ENCODE measurements at regions of chr16 and their contacts with region 1.

Region 1: GRCh38 chr16:3150346-3151218 is 15.8 kb downstream of the ZNF213 start:
- DNase-seq: peak; percentile 94 to 99 (median 98)
- ATAC-seq: peak; percentile 81
- H3K4me3 ChIP-seq: peak overlapping the region; percentile 70
- H3K4me3 Mint-ChIP-seq: peak overlapping the region; percentile 93
- H3K27ac ChIP-seq: peak overlapping the region in 1 of 2 donors; percentile 64
- H3K27ac Mint-ChIP-seq: peak overlapping the region; percentile 98
- H3K4me1 ChIP-seq: peaks cover 37% of the 10 kb centered on the region
- H3K4me1 Mint-ChIP-seq: peaks cover 31% of the 10 kb centered on the region
- H3K27me3 ChIP-seq: no peaks in the 10 kb centered on the region
- H3K27me3 Mint-ChIP-seq: peaks cover 22% of the 10 kb centered on the region
- CTCF ChIP-seq: no peak

Region 2: DNA sequence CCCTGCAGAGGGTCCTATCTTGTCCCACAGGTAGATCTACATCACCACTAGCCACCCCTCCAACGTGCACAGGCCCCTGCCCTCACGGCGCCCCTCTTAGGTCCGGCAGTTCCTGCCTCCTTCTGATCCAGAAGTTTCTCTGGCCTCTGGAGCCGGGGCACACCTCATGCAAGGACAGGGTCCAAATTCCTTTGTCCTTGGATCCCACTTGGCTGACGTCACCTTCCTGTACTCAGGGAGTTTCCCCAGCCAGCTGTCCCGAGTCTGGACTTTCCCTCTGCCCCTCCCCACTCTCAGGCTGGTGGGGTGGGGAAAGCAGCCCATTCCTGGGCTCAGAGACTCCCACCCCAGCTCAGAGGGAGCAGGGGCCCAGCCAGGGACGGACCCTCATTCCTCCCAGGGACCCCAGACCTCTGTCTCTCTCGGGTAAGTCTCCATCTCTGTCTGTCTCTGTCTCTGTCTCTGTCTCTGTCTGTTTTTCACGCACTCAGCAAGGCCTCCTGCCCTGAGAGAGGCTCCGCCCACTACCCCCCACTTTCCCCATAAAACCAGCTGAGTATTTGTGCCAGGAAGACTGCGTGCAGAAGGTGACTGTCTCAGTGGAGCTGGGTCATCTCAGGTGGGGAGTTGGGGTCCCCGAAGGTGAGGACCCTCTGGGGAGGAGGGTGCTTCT is 85.4 kb before region 1 on chr16 and contains the start of gene IL32:
- CTCF ChIA-PET with region 1: interaction called, 3 read pairs
- POLR2A ChIA-PET with region 1: interaction called, 10 read pairs
- intact Hi-C with region 1: no loop called
- DNase-seq: peak; percentile 46 to 88 (median 68)
- ATAC-seq: peak; percentile 65
- H3K4me3 ChIP-seq: peak within 1 kb of the TSS; percentile 99
- H3K4me3 Mint-ChIP-seq: peak within 1 kb of the TSS; percentile 99
- H3K27ac ChIP-seq: peak within 1 kb of the TSS; percentile 85 to 98
- H3K27ac Mint-ChIP-seq: peak within 1 kb of the TSS; percentile 97
- H3K4me1 ChIP-seq: peaks cover 78% of the 10 kb centered on the region
- H3K4me1 Mint-ChIP-seq: peaks cover 67% of the 10 kb centered on the region
- H3K27me3 ChIP-seq: no peaks in the 10 kb centered on the region
- H3K27me3 Mint-ChIP-seq: no peaks in the 10 kb centered on the region
- CTCF ChIP-seq: no peak
- total RNA-seq, gene IL32: 378 to 383 TPM

Region 3: GRCh38 chr16:3074860-3075522 is 75.6 kb before region 1 on chr16:
- CTCF ChIA-PET with region 1: no interaction called
- POLR2A ChIA-PET with region 1: interaction called, 13 read pairs
- intact Hi-C with region 1: no loop called
- DNase-seq: peak; percentile 58 to 95 (median 82)
- ATAC-seq: peak; percentile 89
- H3K4me3 ChIP-seq: peak overlapping the region; percentile 34
- H3K4me3 Mint-ChIP-seq: peak overlapping the region; percentile 77
- H3K27ac ChIP-seq: peak overlapping the region; percentile 80 to 86
- H3K27ac Mint-ChIP-seq: peak overlapping the region; percentile 95
- H3K4me1 ChIP-seq: peaks cover 96% of the 10 kb centered on the region
- H3K4me1 Mint-ChIP-seq: peaks cover 93% of the 10 kb centered on the region
- H3K27me3 ChIP-seq: no peaks in the 10 kb centered on the region
- H3K27me3 Mint-ChIP-seq: no peaks in the 10 kb centered on the region
- CTCF ChIP-seq: no peak

Region 4: GRCh38 chr16:3087243-3088235 is 63.0 kb before region 1 on chr16:
- CTCF ChIA-PET with region 1: no interaction called
- POLR2A ChIA-PET with region 1: no interaction called
- intact Hi-C with region 1: no loop called
- DNase-seq: no peak
- ATAC-seq: no peak
- H3K4me3 ChIP-seq: peak overlapping the region; percentile 44
- H3K4me3 Mint-ChIP-seq: peak overlapping the region; percentile 42
- H3K27ac ChIP-seq: peak overlapping the region; percentile 10 to 22
- H3K27ac Mint-ChIP-seq: peak overlapping the region; percentile 48
- H3K4me1 ChIP-seq: peaks cover 63% of the 10 kb centered on the region
- H3K4me1 Mint-ChIP-seq: peaks cover 57% of the 10 kb centered on the region
- H3K27me3 ChIP-seq: no peaks in the 10 kb centered on the region
- H3K27me3 Mint-ChIP-seq: no peaks in the 10 kb centered on the region
- CTCF ChIP-seq: no peak

Region 5: DNA sequence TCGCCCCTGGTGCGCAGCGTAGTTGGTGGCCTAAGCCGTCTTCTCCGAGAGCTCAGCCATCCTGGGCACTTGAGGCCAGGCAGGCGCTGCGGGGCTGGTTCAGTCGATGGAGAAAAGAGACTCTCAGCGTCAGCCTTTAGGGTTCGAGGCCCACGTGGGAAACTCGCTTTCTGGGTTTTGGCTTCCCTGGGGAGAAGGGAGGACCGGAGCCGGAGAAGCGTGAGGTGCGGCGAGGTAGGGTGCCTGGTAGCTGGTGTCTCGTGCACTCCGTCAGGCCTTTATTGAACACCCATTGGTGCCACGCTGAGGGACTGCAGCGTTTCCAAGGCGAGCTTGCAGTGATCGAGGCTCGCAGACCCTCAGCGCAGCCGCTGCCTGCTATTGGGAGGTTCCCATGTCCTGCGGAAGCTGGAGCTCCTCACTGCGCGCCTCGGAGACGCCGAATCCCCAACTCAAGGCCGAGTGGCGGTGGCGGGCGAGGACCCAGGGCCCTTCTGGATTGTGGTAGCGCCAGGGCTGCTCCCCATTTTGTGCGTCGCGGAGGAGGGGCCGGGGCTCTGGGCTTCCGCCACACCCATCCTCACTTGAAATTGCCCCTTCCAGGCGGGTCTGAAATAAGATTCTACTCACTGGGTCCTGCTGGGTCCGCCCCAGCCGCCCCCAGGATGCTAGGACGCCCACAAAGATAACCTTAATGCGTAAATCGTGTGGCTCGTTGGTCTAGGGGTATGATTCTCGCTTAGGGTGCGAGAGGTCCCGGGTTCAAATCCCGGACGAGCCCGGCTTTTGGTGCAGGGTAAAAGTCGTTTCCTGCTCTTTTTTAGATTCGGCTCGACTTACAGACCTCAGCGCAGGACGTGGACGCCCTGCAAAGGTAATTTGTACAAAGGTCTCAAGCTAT is 38.6 kb after region 1 on chr16:
- CTCF ChIA-PET with region 1: no interaction called
- POLR2A ChIA-PET with region 1: interaction called, 8 read pairs
- intact Hi-C with region 1: loop called in 1 of 2 experiments (anchors 5 kb)
- DNase-seq: peak in 6 of 14 experiments; percentile 7 to 59 (median 44)
- ATAC-seq: peak; percentile 44
- H3K4me3 ChIP-seq: peak overlapping the region; percentile 33
- H3K4me3 Mint-ChIP-seq: peak overlapping the region; percentile 81
- H3K27ac ChIP-seq: no peak overlapping the region
- H3K27ac Mint-ChIP-seq: peak overlapping the region; percentile 47
- H3K4me1 ChIP-seq: peaks cover 51% of the 10 kb centered on the region
- H3K4me1 Mint-ChIP-seq: peaks cover 44% of the 10 kb centered on the region
- H3K27me3 ChIP-seq: peaks cover 68 to 78% of the 10 kb centered on the region in 2 experiments
- H3K27me3 Mint-ChIP-seq: peaks cover 88% of the 10 kb centered on the region
- CTCF ChIP-seq: no peak

Region 6: DNA sequence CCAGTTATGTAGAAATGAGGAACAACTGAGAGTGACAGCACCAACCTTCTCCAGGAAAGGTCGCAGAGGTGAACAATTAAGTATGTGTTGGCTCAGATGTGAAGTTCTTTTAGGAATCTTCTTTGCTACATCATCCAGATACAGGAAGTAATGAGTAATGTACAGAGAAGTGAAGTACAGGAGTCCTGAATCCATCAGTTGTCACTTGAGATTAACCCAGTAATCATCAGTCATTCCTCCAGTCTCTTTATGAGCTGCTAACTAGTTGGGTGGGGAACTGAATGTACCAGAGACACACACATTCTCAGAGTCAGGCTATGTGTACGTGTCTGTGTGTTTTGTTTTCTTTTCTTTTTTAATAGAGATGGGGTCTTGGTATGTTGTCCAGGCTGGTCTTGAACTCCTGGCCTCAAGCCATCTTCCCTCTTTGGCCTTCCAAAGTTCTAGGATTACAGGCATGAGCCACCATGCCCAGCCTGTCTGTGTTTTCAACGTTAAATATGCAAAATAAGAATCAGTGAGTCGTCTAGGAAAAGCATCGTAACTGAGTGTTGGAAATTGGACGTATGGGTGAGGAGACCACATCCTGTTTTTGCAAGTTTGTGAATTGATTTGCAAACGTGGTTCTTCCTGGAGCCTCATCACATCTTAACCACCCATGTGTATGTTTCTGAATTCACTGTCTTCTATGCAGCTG is 64.5 kb after region 1 on chr16:
- CTCF ChIA-PET with region 1: no interaction called
- POLR2A ChIA-PET with region 1: interaction called, 7 read pairs
- intact Hi-C with region 1: loop called in 1 of 2 experiments (anchors 5 kb)
- DNase-seq: peak in 7 of 14 experiments; percentile 30 to 89 (median 43)
- ATAC-seq: peak; percentile 86
- H3K4me3 ChIP-seq: no peak overlapping the region
- H3K4me3 Mint-ChIP-seq: peak overlapping the region; percentile 71
- H3K27ac ChIP-seq: peak overlapping the region; percentile 48 to 79
- H3K27ac Mint-ChIP-seq: peak overlapping the region; percentile 96
- H3K4me1 ChIP-seq: peaks cover 48% of the 10 kb centered on the region
- H3K4me1 Mint-ChIP-seq: peaks cover 39% of the 10 kb centered on the region
- H3K27me3 ChIP-seq: no peaks in the 10 kb centered on the region
- H3K27me3 Mint-ChIP-seq: no peaks in the 10 kb centered on the region
- CTCF ChIP-seq: no peak

Region 7: DNA sequence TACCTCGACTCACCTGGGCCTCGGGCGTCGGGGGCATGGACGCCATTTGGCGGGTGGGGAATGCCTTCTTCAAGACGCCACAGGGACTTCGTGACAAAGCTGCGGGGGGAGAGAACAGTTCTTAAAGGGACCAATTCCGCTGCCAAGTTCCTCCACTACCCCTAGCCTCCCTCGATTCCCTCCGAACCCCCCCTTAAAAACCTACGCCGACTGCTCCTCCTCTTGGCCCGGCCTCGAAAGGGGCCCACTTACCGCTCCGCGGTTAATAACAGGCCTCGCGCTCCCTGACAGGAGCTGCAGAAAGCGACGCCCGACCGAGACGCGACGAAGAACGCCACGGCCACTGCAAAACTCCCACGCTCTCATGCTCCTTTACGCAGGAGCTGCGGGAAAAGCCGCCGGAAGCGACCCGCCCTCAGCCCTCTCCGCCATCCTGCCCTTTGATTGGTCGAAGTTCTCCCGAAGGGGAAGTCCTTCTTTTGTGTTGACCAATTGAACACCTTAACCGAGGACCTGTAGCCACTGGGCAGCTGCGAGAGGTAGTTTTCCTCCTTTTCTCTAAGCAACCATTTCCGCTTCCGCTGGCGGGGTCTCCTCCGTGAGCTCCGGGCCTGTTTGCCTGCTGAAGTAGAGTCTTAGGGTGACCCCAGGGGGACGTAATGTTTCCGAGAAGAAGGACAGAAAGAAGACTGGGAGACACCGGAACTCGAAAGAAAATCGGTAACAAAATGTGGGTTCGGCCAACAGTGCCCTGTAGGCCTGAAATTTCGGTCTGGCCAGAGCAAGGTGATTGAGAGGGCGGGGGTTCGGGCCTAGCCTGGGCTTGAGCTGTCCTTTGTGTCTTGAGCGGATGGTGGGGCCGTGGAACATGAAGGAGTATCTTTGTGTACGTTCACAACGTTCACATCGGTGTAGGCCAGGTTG is 292.8 kb after region 1 on chr16 and contains the starts of genes NAA60 and ZNF597:
- CTCF ChIA-PET with region 1: no interaction called
- POLR2A ChIA-PET with region 1: no interaction called
- intact Hi-C with region 1: loop called in 1 of 2 experiments (anchors 10 kb)
- DNase-seq: peak; percentile 50 to 92 (median 72)
- ATAC-seq: peak; percentile 90
- H3K4me3 ChIP-seq: peak within 1 kb of the TSS; percentile 71
- H3K4me3 Mint-ChIP-seq: peak within 1 kb of the TSS; percentile 98
- H3K27ac ChIP-seq: peak within 1 kb of the TSS; percentile 70 to 79
- H3K27ac Mint-ChIP-seq: peak within 1 kb of the TSS; percentile 95
- H3K4me1 ChIP-seq: peaks cover 25% of the 10 kb centered on the region
- H3K4me1 Mint-ChIP-seq: peaks cover 24% of the 10 kb centered on the region
- H3K27me3 ChIP-seq: no peaks in the 10 kb centered on the region
- H3K27me3 Mint-ChIP-seq: no peaks in the 10 kb centered on the region
- CTCF ChIP-seq: no peak
- total RNA-seq, gene NAA60: 27.2 to 27.8 TPM
- total RNA-seq, gene ZNF597: 2.3 to 2.5 TPM

Region 8: DNA sequence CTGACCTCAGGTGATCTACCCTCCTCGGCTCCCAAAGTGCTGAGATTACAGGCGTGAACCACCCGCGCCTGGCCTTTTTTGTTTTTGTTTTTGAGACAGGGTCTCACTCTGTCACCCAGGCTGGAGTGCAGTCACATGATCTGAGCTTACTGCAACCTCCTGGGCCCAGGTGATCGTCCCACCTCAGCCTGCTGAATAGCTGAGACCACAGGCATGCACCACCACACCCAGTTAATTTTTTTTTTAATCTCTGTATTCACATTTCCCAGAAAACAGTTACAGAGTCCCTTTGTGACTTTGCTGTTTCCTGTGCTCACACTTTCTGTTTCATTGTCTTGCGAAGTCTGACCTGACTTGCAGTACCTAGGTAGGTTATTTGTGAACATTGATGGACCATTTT is 352.9 kb after region 1 on chr16:
- CTCF ChIA-PET with region 1: no interaction called
- POLR2A ChIA-PET with region 1: interaction called, 3 read pairs
- intact Hi-C with region 1: loop called in 1 of 2 experiments (anchors 5 kb)
- DNase-seq: peak; percentile 23 to 89 (median 62)
- ATAC-seq: peak; percentile 55
- H3K4me3 ChIP-seq: peak overlapping the region; percentile 25
- H3K4me3 Mint-ChIP-seq: peak overlapping the region; percentile 83
- H3K27ac ChIP-seq: peak overlapping the region; percentile 42 to 66
- H3K27ac Mint-ChIP-seq: peak overlapping the region; percentile 95
- H3K4me1 ChIP-seq: peaks cover 60% of the 10 kb centered on the region
- H3K4me1 Mint-ChIP-seq: peaks cover 72% of the 10 kb centered on the region
- H3K27me3 ChIP-seq: no peaks in the 10 kb centered on the region
- H3K27me3 Mint-ChIP-seq: no peaks in the 10 kb centered on the region
- CTCF ChIP-seq: no peak